Common myeloid progenitor, CD34-positive (primary cell): ENCODE measurements at regions of chr19 and their contacts with region 1.

Region 1: GRCh38 chr19:48999481-49000325 is 6.0 kb downstream of the RUVBL2 start:
- DNase-seq: peak; percentile 63 to 86 (median 85)
- H3K4me3 ChIP-seq: no peak overlapping the region
- H3K27ac ChIP-seq: no peak overlapping the region
- H3K4me1 ChIP-seq: peaks cover 0 to 9% (median 5%) of the 10 kb centered on the region in 4 experiments
- H3K27me3 ChIP-seq: no peaks in the 10 kb centered on the region

Region 2: DNA sequence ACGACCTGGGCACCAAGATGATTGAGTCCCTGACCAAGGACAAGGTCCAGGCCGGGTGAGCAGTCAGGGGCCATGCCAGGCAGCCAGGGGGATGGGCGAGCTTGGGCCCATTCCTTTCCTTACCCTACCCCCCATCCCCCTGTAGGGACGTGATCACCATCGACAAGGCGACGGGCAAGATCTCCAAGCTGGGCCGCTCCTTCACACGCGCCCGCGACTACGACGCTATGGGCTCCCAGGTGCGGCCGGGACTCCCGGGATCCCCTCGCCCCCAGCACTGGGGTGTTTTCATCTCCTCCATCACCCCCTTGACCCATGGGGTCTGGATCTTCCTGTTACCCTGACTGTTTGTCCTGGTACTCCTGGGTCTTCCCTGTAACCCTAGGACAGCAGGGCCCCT is 10.1 kb after region 1 on chr19:
- CTCF ChIA-PET with region 1: interaction called, 15 read pairs
- POLR2A ChIA-PET with region 1: no interaction called
- DNase-seq: no peak
- H3K4me3 ChIP-seq: no peak overlapping the region
- H3K27ac ChIP-seq: no peak overlapping the region
- H3K4me1 ChIP-seq: no peaks in the 10 kb centered on the region
- H3K27me3 ChIP-seq: no peaks in the 10 kb centered on the region

Region 3: DNA sequence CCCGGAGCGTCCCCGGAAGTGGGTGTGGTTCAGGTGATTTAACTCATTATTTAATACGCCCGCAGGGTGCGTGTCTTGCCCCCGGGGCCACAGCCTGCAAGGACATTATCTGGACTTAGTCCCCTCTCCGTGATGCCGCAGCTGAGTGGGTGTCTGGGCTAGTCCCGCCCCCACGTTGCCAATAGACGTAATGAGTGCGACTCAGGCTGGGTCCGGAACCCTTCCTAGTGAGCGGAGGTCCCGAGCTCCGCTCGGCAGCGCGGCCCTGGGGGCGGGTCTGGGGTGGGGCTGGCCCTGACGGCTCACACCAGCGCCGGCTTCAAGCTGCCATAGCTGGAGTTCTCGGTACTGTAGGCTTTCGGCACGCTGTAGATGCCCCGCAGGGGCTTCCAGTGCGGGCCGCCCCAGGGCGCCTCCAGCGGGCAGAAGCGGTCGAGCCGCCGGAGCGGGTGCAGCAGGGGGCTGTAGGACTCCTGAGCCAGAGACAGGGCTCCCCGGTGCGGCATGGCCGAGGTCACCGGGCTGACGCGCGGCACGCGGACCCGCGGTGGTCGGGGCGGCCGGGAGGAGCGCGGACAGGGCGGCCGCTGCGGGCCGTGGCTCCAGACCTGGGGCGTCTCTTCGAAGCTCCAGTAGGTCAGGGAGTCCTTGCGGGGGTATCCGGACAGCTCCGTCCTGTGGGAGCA is 18.1 kb after region 1 on chr19:
- CTCF ChIA-PET with region 1: interaction called, 10 read pairs
- POLR2A ChIA-PET with region 1: no interaction called
- DNase-seq: peak; percentile 63 to 83 (median 81)
- H3K4me3 ChIP-seq: peak overlapping the region; percentile 4 to 73 (median 56)
- H3K27ac ChIP-seq: no peak overlapping the region
- H3K4me1 ChIP-seq: peaks cover 0 to 24% (median 22%) of the 10 kb centered on the region in 4 experiments
- H3K27me3 ChIP-seq: peaks cover 0 to 43% (median 9%) of the 10 kb centered on the region in 5 experiments